Right lobe of liver (tissue), 6 donors: ENCODE measurements at regions of chr15 and their contacts with region 1.

Region 1: DNA sequence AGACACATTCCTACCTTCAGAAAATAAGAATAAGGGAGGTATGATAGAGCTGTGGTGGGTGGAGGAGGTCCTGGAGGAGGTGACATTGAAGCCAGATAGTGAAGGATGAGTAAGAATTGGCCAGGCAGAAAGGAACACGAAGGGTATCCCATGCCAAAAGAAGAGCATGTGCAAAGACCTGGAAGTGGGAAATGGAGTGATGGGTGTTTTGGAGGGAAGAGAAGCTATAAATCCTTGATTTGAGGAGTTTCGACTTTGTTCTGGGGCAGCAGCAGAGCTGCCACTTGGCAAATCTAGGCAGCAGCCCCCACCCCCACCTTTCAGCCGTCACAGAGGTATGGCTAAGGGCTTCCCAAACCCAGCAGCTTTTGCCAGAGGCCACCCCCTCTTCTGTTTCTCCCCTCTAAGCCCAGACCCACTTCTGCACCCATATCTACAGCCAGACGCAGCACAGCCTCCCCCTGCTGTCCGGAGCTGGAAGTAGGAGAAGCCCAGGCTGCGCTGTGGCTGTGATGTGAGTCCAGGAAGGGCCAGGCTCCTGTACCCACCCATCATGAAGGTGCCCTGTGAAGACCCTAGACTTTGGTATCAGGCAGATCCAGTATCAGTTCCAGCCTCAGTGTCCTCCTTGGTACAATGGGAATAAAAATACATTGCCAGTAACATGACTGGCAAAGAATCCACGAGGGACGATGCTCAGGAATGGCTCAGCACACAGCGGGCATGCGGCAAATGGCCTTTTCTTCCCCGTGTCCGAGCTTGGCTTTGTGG is 188.7 kb upstream of the LINGO1 start:
- DNase-seq: peak; percentile 62 to 72 (median 67)
- ATAC-seq: peak; percentile 64 to 76 (median 72)
- H3K4me3 ChIP-seq: no peak overlapping the region
- H3K27ac ChIP-seq: no peak overlapping the region
- H3K4me1 ChIP-seq: peaks cover 0 to 12% (median 0%) of the 10 kb centered on the region in 4 donors
- H3K27me3 ChIP-seq: peaks cover 0 to 8% of the 10 kb centered on the region in 2 donors
- CTCF ChIP-seq: peak; percentile 44 to 68 (median 52)
- POLR2A ChIP-seq: no peak

Region 2: GRCh38 chr15:77418966-77419835 is 402.2 kb before region 1 on chr15:
- intact Hi-C with region 1: no loop called
- DNase-seq: peak; percentile 66 to 68 (median 68)
- ATAC-seq: peak; percentile 0 to 6 (median 2)
- H3K4me3 ChIP-seq: peak overlapping the region; percentile 65 to 75 (median 68)
- H3K27ac ChIP-seq: peak overlapping the region; percentile 80 to 95 (median 91)
- H3K4me1 ChIP-seq: peaks cover 0 to 15% (median 3%) of the 10 kb centered on the region in 4 donors
- H3K27me3 ChIP-seq: no peaks in the 10 kb centered on the region
- CTCF ChIP-seq: peak in 3 of 4 donors; percentile 20 to 40 (median 24)
- POLR2A ChIP-seq: no peak

Region 3: GRCh38 chr15:77633134-77633912 is 188.1 kb before region 1 on chr15:
- intact Hi-C with region 1: loop called in 1 of 2 experiments (anchors 10 kb)
- DNase-seq: peak; percentile 90
- ATAC-seq: peak; percentile 97 to 99 (median 98)
- H3K4me3 ChIP-seq: peak overlapping the region; percentile 25 to 48 (median 38)
- H3K27ac ChIP-seq: no peak overlapping the region
- H3K4me1 ChIP-seq: peaks cover 0 to 11% (median 2%) of the 10 kb centered on the region in 4 donors
- H3K27me3 ChIP-seq: peaks cover 0 to 20% of the 10 kb centered on the region in 2 donors
- CTCF ChIP-seq: peak; percentile 98 to 100 (median 100)
- POLR2A ChIP-seq: no peak

Region 4: DNA sequence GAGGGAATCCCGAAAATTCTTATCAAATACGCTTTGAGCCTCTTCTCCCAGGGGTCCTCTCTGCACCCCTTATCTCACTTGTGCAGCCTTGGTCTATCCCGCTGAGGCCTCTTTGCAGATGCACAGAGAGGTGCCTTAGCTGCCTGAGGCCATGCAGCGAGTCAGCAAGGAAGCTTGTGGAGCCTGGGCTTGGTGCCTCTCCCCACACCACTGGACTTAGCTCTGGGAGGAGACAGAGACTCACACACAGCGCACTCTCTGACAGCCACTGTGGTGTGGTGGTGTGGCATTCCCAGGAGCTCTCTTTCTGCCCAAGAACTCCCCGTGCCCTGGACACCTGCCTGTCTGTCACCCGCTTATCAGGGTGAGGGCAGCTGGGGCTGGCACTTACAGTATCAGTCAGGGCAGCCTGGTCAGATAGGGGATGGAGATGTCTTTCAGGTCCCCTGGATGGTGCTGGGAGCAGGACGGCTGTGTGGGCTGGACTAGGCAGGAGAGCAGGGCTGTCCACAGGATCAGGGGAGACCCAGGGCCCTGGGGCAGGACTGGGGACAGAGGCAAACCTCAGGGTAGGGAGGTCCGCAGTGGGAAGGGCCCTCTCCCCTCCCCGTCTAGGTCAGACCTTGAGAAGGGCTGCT is 178.5 kb before region 1 on chr15:
- intact Hi-C with region 1: loop called (anchors 5 to 10 kb)
- DNase-seq: no peak
- ATAC-seq: peak in 1 of 4 donors; percentile 28
- H3K4me3 ChIP-seq: no peak overlapping the region
- H3K27ac ChIP-seq: no peak overlapping the region
- H3K4me1 ChIP-seq: no peaks in the 10 kb centered on the region
- H3K27me3 ChIP-seq: no peaks in the 10 kb centered on the region
- CTCF ChIP-seq: no peak
- POLR2A ChIP-seq: no peak

Region 5: DNA sequence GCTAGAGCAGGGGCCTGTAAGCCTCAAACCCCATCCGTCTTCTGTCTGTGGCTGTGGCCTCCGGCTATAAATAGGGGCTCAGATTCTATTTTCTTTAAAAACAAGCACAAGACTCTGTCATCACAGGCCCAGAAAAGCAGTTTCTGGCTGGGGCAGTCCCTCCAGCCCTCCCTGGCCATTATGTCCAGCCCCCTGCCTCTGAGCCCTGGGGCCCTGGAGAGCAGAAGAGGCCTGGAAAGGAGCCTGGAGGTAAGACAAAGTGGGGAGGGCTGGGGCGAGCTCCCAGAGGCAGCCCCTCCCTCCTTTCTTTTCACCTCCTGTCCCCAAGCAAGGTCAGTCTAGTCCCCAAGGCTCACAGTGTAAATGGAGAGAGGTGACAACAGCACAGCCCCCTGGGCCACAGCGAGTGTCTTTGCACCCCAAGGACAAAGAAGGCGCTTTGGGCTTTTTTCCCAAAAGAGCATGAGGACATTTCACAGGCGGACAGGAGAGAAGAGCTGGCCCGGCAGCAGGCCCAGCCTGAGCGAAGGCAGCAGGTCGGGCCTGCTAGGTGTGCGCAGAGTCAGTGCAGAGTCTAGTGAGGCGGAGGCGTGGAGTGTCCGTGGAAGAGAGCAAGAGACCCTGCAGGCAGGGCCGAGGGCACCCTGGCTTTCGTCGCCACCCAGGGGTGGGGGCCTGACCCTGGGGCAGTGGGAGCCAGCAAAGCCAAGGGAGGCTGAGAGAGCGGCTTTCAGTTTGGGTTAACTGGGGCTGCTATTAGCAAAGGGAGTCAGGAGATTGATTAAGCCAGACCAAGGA is 67.8 kb after region 1 on chr15:
- intact Hi-C with region 1: no loop called
- DNase-seq: no peak
- ATAC-seq: no peak
- H3K4me3 ChIP-seq: no peak overlapping the region
- H3K27ac ChIP-seq: no peak overlapping the region
- H3K4me1 ChIP-seq: no peaks in the 10 kb centered on the region
- H3K27me3 ChIP-seq: no peaks in the 10 kb centered on the region
- CTCF ChIP-seq: no peak
- POLR2A ChIP-seq: no peak